Naive thymus-derived CD4-positive, alpha-beta T cell (primary cell): ENCODE measurements at regions of chr17 and their contacts with region 1.

Region 1: DNA sequence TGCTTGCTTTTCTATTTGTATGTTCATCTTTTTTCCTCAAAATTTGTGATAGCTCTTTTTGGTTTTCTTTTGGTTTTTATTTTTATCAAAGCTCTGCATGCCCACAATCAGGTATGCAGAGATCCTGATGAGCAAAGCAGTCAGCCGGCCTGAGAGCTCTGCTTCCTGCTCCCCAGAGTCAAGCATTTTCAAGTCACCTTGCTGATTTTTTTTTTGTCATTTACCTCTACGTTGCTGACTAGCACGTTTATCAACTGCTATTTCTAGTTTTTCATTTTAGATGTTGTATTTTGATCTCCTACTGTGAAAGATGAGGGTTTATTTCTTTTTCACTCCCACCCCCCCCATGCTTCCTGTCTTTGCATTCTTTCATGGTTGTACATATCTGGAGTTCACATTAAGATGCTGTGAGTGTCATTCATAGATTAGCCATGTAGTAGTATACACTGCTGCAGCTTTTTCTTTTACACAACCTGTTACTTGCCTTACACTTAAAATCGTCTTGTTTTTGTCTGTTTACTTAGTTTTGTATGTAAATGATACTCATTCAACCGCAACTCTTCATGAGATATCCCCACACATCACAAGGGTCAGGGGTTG is 196.2 kb downstream of the LGALS9B start:
- DNase-seq: peak in 6 of 9 donors; percentile 10 to 65 (median 54)
- ATAC-seq: peak; percentile 41
- H3K4me3 ChIP-seq: no peak overlapping the region
- H3K4me3 Mint-ChIP-seq: peak overlapping the region; percentile 40 to 83 (median 71)
- H3K27ac ChIP-seq: peak overlapping the region; percentile 25
- H3K27ac Mint-ChIP-seq: peak overlapping the region; percentile 68 to 98 (median 90)
- H3K4me1 ChIP-seq: peaks cover 11 to 85% of the 10 kb centered on the region in 2 donors
- H3K4me1 Mint-ChIP-seq: peaks cover 48 to 98% (median 90%) of the 10 kb centered on the region in 7 donors
- H3K27me3 ChIP-seq: no peaks in the 10 kb centered on the region
- H3K27me3 Mint-ChIP-seq: no peaks in the 10 kb centered on the region

Region 2: GRCh38 chr17:20174588-20175265 is 96.4 kb before region 1 on chr17:
- CTCF ChIA-PET with region 1: no interaction called
- POLR2A ChIA-PET with region 1: no interaction called
- intact Hi-C with region 1: no loop called
- DNase-seq: no peak
- ATAC-seq: no peak
- H3K4me3 ChIP-seq: no peak overlapping the region
- H3K4me3 Mint-ChIP-seq: no peak overlapping the region
- H3K27ac ChIP-seq: no peak overlapping the region
- H3K27ac Mint-ChIP-seq: no peak overlapping the region
- H3K4me1 ChIP-seq: no peaks in the 10 kb centered on the region
- H3K4me1 Mint-ChIP-seq: peaks cover 0 to 3% (median 0%) of the 10 kb centered on the region in 7 donors
- H3K27me3 ChIP-seq: no peaks in the 10 kb centered on the region
- H3K27me3 Mint-ChIP-seq: peaks cover 0 to 23% (median 8%) of the 10 kb centered on the region in 5 donors

Region 3: DNA sequence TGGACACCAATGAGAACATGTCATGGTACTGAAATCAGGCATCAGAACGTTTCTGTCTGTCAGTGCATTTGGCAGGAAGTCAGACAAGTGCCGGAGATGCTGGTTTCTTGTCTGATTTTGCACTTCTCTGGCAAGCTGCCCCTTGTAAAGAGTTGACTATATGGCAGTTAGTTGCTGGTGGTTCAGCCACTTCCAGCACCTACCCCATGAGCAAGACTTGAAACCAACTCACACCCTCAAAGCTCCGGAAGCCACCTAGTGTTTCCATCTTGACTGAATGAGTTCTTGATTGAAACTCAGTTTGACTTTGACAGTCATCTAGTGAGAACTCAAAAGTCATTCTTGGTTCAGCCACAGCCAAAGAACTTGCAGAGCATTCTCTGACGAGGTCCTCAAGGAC is 36.8 kb before region 1 on chr17:
- CTCF ChIA-PET with region 1: interaction called, 6 read pairs
- POLR2A ChIA-PET with region 1: interaction called, 6 read pairs
- intact Hi-C with region 1: loop called (anchors 1 to 5 kb)
- DNase-seq: peak in 8 of 9 donors; percentile 58 to 79 (median 69)
- ATAC-seq: peak; percentile 93
- H3K4me3 ChIP-seq: peak overlapping the region; percentile 19
- H3K4me3 Mint-ChIP-seq: peak overlapping the region; percentile 64 to 84 (median 69)
- H3K27ac ChIP-seq: peak overlapping the region; percentile 26
- H3K27ac Mint-ChIP-seq: peak overlapping the region; percentile 74 to 92 (median 88)
- H3K4me1 ChIP-seq: peaks cover 4 to 24% of the 10 kb centered on the region in 2 donors
- H3K4me1 Mint-ChIP-seq: peaks cover 29 to 73% (median 60%) of the 10 kb centered on the region in 7 donors
- H3K27me3 ChIP-seq: no peaks in the 10 kb centered on the region
- H3K27me3 Mint-ChIP-seq: no peaks in the 10 kb centered on the region

Region 4: GRCh38 chr17:20256144-20256543 is 15.0 kb before region 1 on chr17:
- CTCF ChIA-PET with region 1: interaction called, 4 read pairs
- POLR2A ChIA-PET with region 1: interaction called, 7 read pairs
- intact Hi-C with region 1: loop called in 1 of 2 experiments (anchors 1 kb)
- DNase-seq: no peak
- ATAC-seq: no peak
- H3K4me3 ChIP-seq: no peak overlapping the region
- H3K4me3 Mint-ChIP-seq: no peak overlapping the region
- H3K27ac ChIP-seq: no peak overlapping the region
- H3K27ac Mint-ChIP-seq: peak overlapping the region in 5 of 9 donors; percentile 34 to 85 (median 53)
- H3K4me1 ChIP-seq: peaks cover 0 to 32% of the 10 kb centered on the region in 2 donors
- H3K4me1 Mint-ChIP-seq: peaks cover 21 to 81% (median 70%) of the 10 kb centered on the region in 7 donors
- H3K27me3 ChIP-seq: no peaks in the 10 kb centered on the region
- H3K27me3 Mint-ChIP-seq: no peaks in the 10 kb centered on the region